ENCODE measurements at regions of chr2 and their contacts with region 1.

Region 1: GRCh38 chr2:47767880-47768609 is 14.9 kb upstream of the MSH6 start:
- DNase-seq: peak; percentile 27 to 68
- ATAC-seq: peak; percentile 80

Region 2: GRCh38 chr2:47339745-47340541 is 428.1 kb before region 1 on chr2:
- intact Hi-C with region 1: loop called in 1 of 2 experiments (anchors 10 kb)
- DNase-seq: peak; percentile 58 to 81
- ATAC-seq: peak; percentile 57

Region 3: DNA sequence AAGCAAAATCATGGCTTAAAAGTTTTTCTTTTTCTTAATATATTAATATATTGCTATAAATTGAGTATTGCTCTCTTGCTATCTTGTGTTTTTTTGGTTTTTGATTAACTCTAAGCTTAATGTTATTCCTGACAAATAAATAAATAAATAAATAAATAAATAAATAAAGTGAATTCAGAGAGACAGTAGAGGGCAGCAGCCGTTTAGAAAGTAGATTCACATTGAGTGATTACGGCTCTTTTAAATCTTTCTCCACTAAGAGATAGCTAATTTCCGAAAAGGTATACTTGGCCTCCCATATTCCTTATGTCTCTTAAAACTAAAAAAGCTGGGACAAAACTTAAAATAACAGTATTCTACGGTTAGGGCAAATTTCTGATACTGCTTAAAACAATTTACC is 330.8 kb before region 1 on chr2:
- intact Hi-C with region 1: loop called (anchors 5 to 10 kb)
- DNase-seq: no peak
- ATAC-seq: no peak

Region 4: DNA sequence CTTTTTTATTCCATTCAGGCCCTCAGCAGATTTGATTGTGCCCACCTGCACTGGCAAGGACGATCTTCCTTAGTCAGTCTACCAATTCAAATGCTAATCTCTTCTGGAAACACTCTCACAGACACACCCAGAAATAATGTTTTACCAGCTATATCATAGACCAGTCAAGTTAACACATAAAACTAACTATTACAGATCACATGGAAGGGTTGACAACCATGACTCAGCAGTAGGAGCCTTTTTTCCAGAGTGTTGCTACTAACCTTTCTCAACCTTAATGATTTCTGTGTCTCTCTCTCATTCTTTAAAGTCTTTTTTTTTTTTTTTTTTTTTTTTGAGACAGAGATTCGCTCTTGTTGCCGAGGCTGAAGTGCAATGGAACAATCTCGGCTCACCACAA is 128.6 kb before region 1 on chr2:
- intact Hi-C with region 1: no loop called
- DNase-seq: no peak
- ATAC-seq: peak; percentile 98

Region 5: DNA sequence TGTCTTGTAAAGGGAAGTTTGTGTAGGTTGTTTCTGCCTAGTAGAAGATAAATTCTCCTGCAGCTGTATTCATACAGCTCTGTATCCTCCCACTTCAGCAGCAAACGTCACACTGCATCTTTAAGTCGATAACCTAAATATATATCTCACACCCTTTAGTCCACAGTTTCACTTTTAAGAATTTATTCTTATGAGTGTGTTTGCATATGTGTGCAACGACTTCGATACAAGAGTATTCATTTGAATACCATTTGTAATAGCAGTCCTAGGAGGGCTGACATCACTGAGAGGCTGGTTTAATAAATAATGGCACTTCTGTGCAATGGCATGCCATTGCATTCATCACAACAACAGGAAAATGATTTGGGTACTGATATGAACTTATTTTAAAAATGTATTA is 48.9 kb before region 1 on chr2:
- intact Hi-C with region 1: no loop called
- DNase-seq: no peak
- ATAC-seq: no peak

Measured in left colon (tissue), 2 donors.